Psoas muscle (tissue), 8 donors: ENCODE measurements at regions of chr2 and their contacts with region 1.

Region 1: GRCh38 chr2:157820193-157820592 is 55.9 kb downstream of the ACVR1 start:
- DNase-seq: no peak
- ATAC-seq: peak in 1 of 4 donors; percentile 29
- H3K4me3 ChIP-seq: no peak overlapping the region
- H3K27ac ChIP-seq: no peak overlapping the region
- H3K4me1 ChIP-seq: peaks cover 29% of the 10 kb centered on the region
- H3K27me3 ChIP-seq: no peaks in the 10 kb centered on the region
- CTCF ChIP-seq: no peak

Region 2: GRCh38 chr2:157747695-157748370 is 72.4 kb before region 1 on chr2:
- intact Hi-C with region 1: loop called in 1 of 2 experiments (anchors 2 kb)
- DNase-seq: peak; percentile 64 to 78
- ATAC-seq: peak; percentile 44 to 88 (median 69)
- H3K4me3 ChIP-seq: no peak overlapping the region
- H3K27ac ChIP-seq: peak overlapping the region; percentile 53
- H3K4me1 ChIP-seq: peaks cover 22% of the 10 kb centered on the region
- H3K27me3 ChIP-seq: no peaks in the 10 kb centered on the region
- CTCF ChIP-seq: no peak

Region 3: DNA sequence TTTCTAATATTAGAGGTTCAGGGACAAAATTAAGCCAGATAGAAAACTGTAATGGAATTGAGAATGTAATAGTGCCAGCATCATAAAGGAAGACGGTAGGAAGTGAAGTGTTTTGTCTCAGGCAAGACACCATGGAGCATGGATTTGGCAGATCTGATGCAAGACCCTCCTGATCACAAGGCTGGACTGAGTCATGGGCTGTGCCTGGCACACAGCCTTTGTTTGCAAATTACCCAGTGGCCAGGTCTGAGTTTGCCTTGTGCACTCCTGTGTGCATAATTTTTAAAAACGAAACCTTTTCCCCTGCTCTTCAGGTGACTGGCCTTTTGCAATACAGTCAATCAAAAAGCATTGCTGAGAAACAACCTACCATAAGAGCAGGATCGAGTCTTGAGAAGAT is 279.5 kb after region 1 on chr2:
- intact Hi-C with region 1: no loop called
- DNase-seq: no peak
- ATAC-seq: no peak
- H3K4me3 ChIP-seq: no peak overlapping the region
- H3K27ac ChIP-seq: no peak overlapping the region
- H3K4me1 ChIP-seq: no peaks in the 10 kb centered on the region
- H3K27me3 ChIP-seq: no peaks in the 10 kb centered on the region
- CTCF ChIP-seq: no peak